ENCODE measurements at regions of chr3 and their contacts with region 1.

Region 1: GRCh38 chr3:24237971-24238767 is 256.5 kb downstream of the THRB start:
- DNase-seq: peak; percentile 63 to 95
- H3K4me3 ChIP-seq: no peak overlapping the region; the same call in 1 of the 2 replicates
- H3K27ac ChIP-seq: peak overlapping the region; percentile 77
- H3K4me1 ChIP-seq: peaks cover 65% of the 10 kb centered on the region
- H3K27me3 ChIP-seq: no peaks in the 10 kb centered on the region
- CTCF ChIP-seq: peak; percentile 84

Region 2: DNA sequence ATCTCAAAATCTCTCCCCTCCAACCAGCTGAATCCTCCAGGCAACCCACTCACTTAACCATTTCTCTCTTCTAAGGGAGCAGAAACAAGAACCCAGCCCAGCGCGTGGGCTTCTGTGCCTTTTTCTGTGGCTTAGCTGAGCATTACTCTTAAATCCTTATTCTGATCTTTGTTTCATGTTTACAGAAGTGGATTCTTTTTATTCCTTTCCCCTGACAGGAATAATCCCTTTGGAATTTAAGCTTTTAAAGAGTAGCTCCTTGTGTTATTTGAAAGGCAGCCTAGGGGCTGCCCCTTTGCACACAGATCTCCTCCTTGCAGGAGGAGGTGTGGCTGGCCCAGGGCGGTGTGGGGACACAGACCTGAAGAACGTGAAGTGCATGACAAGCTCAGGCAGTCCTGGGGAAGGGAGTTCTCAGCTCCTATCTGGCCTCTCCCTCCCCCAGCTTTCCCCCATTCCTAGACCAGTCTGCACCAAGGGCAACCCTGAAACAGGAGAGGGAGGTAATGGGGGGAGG is 509.5 kb before region 1 on chr3:
- CTCF ChIA-PET with region 1: no interaction called
- POLR2A ChIA-PET with region 1: interaction called, 12 read pairs
- intact Hi-C with region 1: no loop called
- DNase-seq: peak; percentile 75 to 86
- H3K4me3 ChIP-seq: no peak overlapping the region
- H3K27ac ChIP-seq: peak overlapping the region; percentile 77
- H3K4me1 ChIP-seq: peaks cover 54% of the 10 kb centered on the region
- H3K27me3 ChIP-seq: no peaks in the 10 kb centered on the region
- CTCF ChIP-seq: no peak

Region 3: DNA sequence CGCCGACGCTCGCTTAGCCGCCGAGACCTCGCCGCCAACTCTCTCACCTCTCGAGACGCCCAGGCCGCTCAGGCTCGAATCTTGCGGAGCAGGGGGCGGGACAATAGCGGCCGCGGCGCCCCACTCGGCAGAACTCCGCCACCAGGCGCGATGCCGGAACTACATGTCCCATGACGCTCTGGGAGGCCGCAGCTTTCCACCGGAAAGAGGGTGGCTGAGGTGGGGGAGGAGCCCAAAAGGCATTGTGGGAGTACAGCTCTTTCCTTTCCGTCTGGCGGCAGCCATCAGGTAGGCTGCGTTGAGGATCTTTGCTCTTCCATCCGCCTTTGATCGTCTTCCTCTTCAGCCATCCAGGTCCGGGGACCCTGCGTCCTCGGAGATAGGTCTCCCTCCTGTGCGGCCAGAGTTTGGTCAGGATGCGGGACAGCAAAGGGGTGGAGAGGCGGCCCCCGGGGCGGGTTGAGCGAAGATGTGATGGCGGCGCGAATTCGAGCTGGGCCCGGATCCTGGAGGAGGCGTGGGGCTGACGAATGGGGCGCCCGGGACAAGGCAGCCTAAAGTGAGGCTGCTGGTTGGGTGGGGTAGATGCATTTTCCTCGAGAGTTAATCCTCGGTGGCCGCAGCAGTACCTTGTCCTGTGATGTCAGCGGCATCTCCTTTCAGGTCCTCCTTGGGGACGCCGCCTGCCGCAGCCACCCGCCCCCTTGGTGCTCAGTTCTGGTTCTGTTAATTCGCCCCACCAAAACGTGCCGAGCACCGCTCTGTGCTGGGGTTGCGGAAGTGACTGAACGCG is 321.1 kb before region 1 on chr3 and contains the starts of genes NKIRAS1 and RPL15:
- CTCF ChIA-PET with region 1: no interaction called
- POLR2A ChIA-PET with region 1: no interaction called
- intact Hi-C with region 1: loop called (anchors 10 kb)
- DNase-seq: peak; percentile 84 to 95
- H3K4me3 ChIP-seq: peak within 1 kb of the TSS; percentile 91
- H3K27ac ChIP-seq: peak within 1 kb of the TSS; percentile 84
- H3K4me1 ChIP-seq: peaks cover 52% of the 10 kb centered on the region
- H3K27me3 ChIP-seq: no peaks in the 10 kb centered on the region
- CTCF ChIP-seq: peak; percentile 61
- total RNA-seq, gene NKIRAS1: 8.6 and 12.6 TPM in 2 replicates
- total RNA-seq, gene RPL15: 1,784 and 1,876 TPM in 2 replicates

Region 4: GRCh38 chr3:24047513-24047912 is 190.7 kb before region 1 on chr3:
- CTCF ChIA-PET with region 1: no interaction called
- POLR2A ChIA-PET with region 1: no interaction called
- intact Hi-C with region 1: loop called (anchors 5 kb)
- DNase-seq: no peak
- H3K4me3 ChIP-seq: no peak overlapping the region
- H3K27ac ChIP-seq: peak overlapping the region; percentile 70
- H3K4me1 ChIP-seq: peaks cover 16% of the 10 kb centered on the region
- H3K27me3 ChIP-seq: no peaks in the 10 kb centered on the region
- CTCF ChIP-seq: no peak

Region 5: GRCh38 chr3:24088782-24089181 is 149.4 kb before region 1 on chr3:
- CTCF ChIA-PET with region 1: no interaction called
- POLR2A ChIA-PET with region 1: no interaction called
- intact Hi-C with region 1: no loop called
- DNase-seq: no peak
- H3K4me3 ChIP-seq: no peak overlapping the region
- H3K27ac ChIP-seq: no peak overlapping the region
- H3K4me1 ChIP-seq: no peaks in the 10 kb centered on the region
- H3K27me3 ChIP-seq: no peaks in the 10 kb centered on the region
- CTCF ChIP-seq: peak; percentile 58

Region 6: DNA sequence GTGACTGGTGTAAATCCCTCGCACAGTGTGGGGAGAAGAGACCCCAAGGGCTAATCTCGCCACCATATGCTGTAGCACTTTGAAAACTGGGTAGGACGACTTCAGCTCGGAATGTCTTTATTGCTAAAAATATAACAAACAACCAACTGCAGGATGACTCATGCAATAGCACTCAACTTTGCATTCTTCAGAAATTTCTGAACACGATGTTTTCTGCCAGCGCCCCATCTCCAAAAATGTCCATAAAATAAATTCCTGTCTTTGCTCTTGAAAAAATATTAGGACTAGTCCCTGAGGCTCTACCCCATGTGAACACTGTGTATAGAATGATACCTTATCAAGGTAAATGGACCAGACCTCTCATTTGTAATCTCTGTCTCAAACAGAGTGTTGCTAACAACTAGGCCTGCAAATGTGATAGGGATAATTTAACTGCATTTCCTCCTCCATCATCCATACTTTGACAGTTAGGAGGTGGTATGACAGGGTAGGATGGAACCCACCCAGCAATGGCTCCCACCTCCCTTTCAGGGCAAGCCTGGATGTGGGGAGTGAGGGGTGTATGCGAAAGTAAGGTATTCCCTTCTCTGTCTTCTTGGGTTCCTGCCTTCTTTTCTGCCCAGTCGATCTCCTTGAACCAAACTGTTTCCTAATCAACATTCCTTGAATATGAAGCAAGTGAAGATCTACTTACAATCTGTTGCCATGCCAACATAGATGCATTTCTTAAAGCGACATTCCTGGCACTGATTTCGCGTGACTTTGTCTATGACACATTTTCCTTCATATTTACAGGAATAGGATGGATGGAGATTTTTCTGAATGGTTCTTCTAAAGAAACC is 92.0 kb before region 1 on chr3:
- CTCF ChIA-PET with region 1: no interaction called
- POLR2A ChIA-PET with region 1: no interaction called
- intact Hi-C with region 1: loop called (anchors 1 kb)
- DNase-seq: peak; percentile 52 to 84
- H3K4me3 ChIP-seq: no peak overlapping the region
- H3K27ac ChIP-seq: peak overlapping the region; percentile 85
- H3K4me1 ChIP-seq: peaks cover 44% of the 10 kb centered on the region
- H3K27me3 ChIP-seq: no peaks in the 10 kb centered on the region
- CTCF ChIP-seq: no peak

Region 7: GRCh38 chr3:24264748-24265158 is 26.6 kb after region 1 on chr3:
- CTCF ChIA-PET with region 1: interaction called, 14 read pairs
- POLR2A ChIA-PET with region 1: no interaction called
- intact Hi-C with region 1: loop called (anchors 2 kb)
- DNase-seq: no peak
- H3K4me3 ChIP-seq: no peak overlapping the region
- H3K27ac ChIP-seq: no peak overlapping the region
- H3K4me1 ChIP-seq: no peaks in the 10 kb centered on the region
- H3K27me3 ChIP-seq: no peaks in the 10 kb centered on the region
- CTCF ChIP-seq: peak; percentile 91

Region 8: DNA sequence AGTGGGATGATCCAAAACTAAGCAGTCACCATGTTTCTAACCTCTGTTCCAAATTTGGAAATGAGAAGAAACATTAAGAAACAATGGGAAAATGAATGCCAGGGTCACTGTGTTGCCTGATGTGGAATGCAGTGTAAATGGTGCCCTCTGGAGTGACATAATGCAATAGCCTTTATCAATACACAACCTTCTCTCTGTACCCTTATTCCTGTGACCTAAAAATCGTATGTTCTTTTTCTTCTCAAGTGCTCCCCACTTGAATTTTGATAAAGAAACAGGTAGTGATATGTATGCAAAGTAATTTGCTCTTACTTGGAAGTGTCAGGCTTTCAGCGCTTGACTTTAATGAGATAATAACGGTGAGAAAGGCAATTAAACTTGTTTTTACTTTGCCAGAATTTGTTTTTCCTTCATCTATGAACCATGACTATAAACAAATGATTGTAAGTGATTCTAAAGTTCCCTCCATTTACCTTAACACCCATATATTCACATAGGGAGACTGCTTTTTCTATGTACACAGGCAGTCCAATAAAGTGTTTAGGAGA is 402.2 kb after region 1 on chr3:
- CTCF ChIA-PET with region 1: no interaction called
- POLR2A ChIA-PET with region 1: no interaction called
- intact Hi-C with region 1: loop called (anchors 1 kb)
- DNase-seq: peak in 1 of 2 experiments; percentile 6
- H3K4me3 ChIP-seq: no peak overlapping the region
- H3K27ac ChIP-seq: no peak overlapping the region
- H3K4me1 ChIP-seq: no peaks in the 10 kb centered on the region
- H3K27me3 ChIP-seq: no peaks in the 10 kb centered on the region
- CTCF ChIP-seq: peak; percentile 65

Measured in PC-9 (cell line).